ENCODE measurements at regions of chr19 and their contacts with region 1.

Region 1: GRCh38 chr19:44723952-44724319 is 24.6 kb upstream of the BCL3 start:
- DNase-seq: peak; percentile 74 to 88
- H3K4me3 ChIP-seq: no peak overlapping the region
- H3K27ac ChIP-seq: peak overlapping the region; percentile 62
- H3K4me1 ChIP-seq: peaks cover 66% of the 10 kb centered on the region
- H3K27me3 ChIP-seq: no peaks in the 10 kb centered on the region
- CTCF ChIP-seq: peak; percentile 98

Region 2: GRCh38 chr19:44689056-44689895 is 34.7 kb before region 1 on chr19:
- CTCF ChIA-PET with region 1: interaction called, 12 read pairs
- POLR2A ChIA-PET with region 1: interaction called, 11 read pairs
- intact Hi-C with region 1: loop called (anchors 1 kb)
- DNase-seq: peak; percentile 60 to 76
- H3K4me3 ChIP-seq: no peak overlapping the region
- H3K27ac ChIP-seq: peak overlapping the region; percentile 100
- H3K4me1 ChIP-seq: peaks cover 83% of the 10 kb centered on the region
- H3K27me3 ChIP-seq: no peaks in the 10 kb centered on the region
- CTCF ChIP-seq: peak; percentile 98

Region 3: GRCh38 chr19:44746946-44747738 is 23.2 kb after region 1 on chr19:
- CTCF ChIA-PET with region 1: interaction called, 13 read pairs
- POLR2A ChIA-PET with region 1: no interaction called
- intact Hi-C with region 1: no loop called
- DNase-seq: peak; percentile 87 to 97
- H3K4me3 ChIP-seq: peak overlapping the region; percentile 78
- H3K27ac ChIP-seq: peak overlapping the region; percentile 95
- H3K4me1 ChIP-seq: peaks cover 66% of the 10 kb centered on the region
- H3K27me3 ChIP-seq: no peaks in the 10 kb centered on the region
- CTCF ChIP-seq: no peak

Region 4: GRCh38 chr19:44808463-44809371 is 84.8 kb after region 1 on chr19 and contains the start of gene BCAM:
- CTCF ChIA-PET with region 1: interaction called, 12 read pairs
- POLR2A ChIA-PET with region 1: no interaction called
- intact Hi-C with region 1: loop called (anchors 1 kb)
- DNase-seq: peak; percentile 55 to 88
- H3K4me3 ChIP-seq: peak within 1 kb of the TSS; percentile 95
- H3K27ac ChIP-seq: peak within 1 kb of the TSS; percentile 80
- H3K4me1 ChIP-seq: peaks cover 43% of the 10 kb centered on the region
- H3K27me3 ChIP-seq: no peaks in the 10 kb centered on the region
- CTCF ChIP-seq: no peak
- total RNA-seq, gene BCAM: 146 and 199 TPM in 2 replicates